ENCODE measurements at regions of chr4 and their contacts with region 1.

Region 1: GRCh38 chr4:48315728-48316630 is 25.4 kb upstream of the SLAIN2 start:
- DNase-seq: peak; percentile 78
- H3K4me3 ChIP-seq: no peak overlapping the region
- H3K27ac ChIP-seq: no peak overlapping the region
- H3K4me1 ChIP-seq: peaks cover 6% of the 10 kb centered on the region
- H3K27me3 ChIP-seq: no peaks in the 10 kb centered on the region

Region 2: GRCh38 chr4:47786958-47787370 is 529.0 kb before region 1 on chr4:
- in situ Hi-C with region 1: no loop called
- DNase-seq: no peak
- H3K4me3 ChIP-seq: no peak overlapping the region
- H3K27ac ChIP-seq: no peak overlapping the region
- H3K4me1 ChIP-seq: no peaks in the 10 kb centered on the region
- H3K27me3 ChIP-seq: no peaks in the 10 kb centered on the region

Region 3: GRCh38 chr4:48047421-48047844 is 268.5 kb before region 1 on chr4:
- in situ Hi-C with region 1: no loop called
- DNase-seq: no peak
- H3K4me3 ChIP-seq: no peak overlapping the region
- H3K27ac ChIP-seq: no peak overlapping the region
- H3K4me1 ChIP-seq: no peaks in the 10 kb centered on the region
- H3K27me3 ChIP-seq: peaks cover 3% of the 10 kb centered on the region

Region 4: DNA sequence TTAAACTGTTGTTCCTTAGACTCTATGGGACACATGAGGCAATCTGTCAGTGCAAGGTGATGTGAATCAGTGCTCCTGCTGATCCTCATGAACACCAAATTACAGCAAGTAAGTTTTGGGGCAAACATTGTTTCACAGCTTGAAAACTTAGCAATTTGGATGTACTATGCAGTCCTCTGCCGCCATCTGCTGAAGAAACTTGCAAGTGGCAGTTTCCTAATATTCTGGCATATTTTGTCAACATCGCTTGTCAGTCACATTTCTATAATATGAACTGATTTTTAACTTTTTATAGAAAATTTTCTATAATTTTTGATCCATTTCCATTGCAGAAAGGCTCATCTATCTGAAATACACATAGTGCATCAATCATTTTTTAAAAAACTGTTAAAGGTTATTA is 230.4 kb after region 1 on chr4:
- in situ Hi-C with region 1: loop called (anchors 25 kb)
- DNase-seq: peak; percentile 67
- H3K4me3 ChIP-seq: no peak overlapping the region
- H3K27ac ChIP-seq: no peak overlapping the region
- H3K4me1 ChIP-seq: no peaks in the 10 kb centered on the region; the same call in 1 of the 2 replicates
- H3K27me3 ChIP-seq: no peaks in the 10 kb centered on the region

Measured in GM23248 (cell line).